Right ventricle myocardium inferior (tissue), 1 donor: ENCODE measurements at regions of chr6 and their contacts with region 1.

Region 1: GRCh38 chr6:157434349-157435033 is 53.5 kb downstream of the ZDHHC14 start:
- DNase-seq: no peak
- ATAC-seq: peak; percentile 85

Region 2: DNA sequence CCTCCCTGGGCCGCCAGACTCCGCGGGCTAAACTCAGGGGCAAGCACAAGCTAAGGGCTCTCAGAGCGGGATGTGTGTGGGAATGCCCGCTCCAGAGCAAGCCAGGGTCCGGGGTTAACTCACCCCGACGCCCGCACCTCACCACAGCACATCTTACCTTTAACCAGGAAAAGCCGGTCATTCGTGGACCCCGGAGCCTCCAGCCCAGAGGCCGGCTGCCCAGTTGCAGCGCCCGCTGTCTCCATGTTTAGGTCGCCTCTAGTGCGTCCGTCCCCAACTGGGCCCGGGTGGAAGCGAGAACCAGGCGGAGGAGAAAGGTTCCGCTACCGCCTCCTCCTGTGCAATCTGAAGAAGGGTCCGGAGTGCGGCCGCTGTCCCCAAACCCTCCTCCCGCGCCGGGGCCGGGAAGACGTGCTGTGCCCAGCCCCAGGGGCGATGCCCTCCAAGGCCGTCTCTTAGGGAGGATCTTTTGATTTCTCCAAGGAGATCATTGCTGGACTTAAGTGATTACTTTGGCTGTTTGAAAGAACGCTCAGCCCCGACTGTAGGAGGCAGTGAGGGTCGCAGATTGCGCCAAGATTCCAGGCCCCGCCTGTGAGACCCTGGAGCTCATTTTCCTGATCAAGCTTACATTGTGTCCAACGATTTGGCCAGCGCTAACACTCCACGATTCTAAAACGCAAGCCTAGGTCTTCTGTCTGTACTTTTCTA is 111.1 kb before region 1 on chr6 and contains the start of gene TMEM242:
- intact Hi-C with region 1: loop called (anchors 5 kb)
- DNase-seq: peak; percentile 95
- ATAC-seq: peak; percentile 97
- total RNA-seq, gene TMEM242: 19.4 TPM